ENCODE measurements at regions of chr1 and their contacts with region 1.

Region 1: DNA sequence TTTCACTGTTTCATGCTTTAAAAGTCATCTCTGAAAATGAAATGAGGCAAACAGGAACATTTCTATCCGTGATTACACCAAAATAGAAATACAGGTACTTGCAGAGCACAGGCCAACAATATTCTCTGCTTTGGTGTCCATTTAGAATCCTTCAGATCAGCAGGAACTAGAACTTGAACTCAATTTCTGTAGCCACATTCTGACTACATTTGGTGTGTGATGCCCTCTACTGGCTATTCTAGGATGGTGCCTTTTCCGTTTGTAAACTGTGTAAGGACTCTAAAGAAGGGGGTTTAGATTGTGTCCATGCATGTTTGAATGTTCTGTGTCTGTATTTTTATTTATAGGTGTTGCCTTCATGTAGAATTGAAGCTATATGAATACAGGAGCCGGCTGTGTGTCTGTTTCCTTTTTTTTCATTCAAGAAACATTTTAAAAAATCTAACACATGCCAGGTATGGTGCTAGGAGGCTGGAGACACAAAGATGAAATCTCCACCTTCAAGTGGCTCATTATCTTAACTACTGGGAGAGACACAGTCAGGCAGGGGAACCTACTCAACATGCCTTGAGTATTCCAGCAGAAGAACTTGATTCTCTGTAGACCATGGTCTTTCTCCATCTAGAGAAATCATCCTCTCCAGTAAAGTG is 7.6 kb upstream of the ZNF326 start:
- DNase-seq: peak; percentile 56
- H3K4me3 ChIP-seq: no peak overlapping the region
- H3K27ac ChIP-seq: no peak overlapping the region
- H3K27me3 ChIP-seq: no peaks in the 10 kb centered on the region
- CTCF ChIP-seq: peak; percentile 87

Region 2: GRCh38 chr1:89405275-89405929 is 581.9 kb before region 1 on chr1:
- CTCF ChIA-PET with region 1: no interaction called
- POLR2A ChIA-PET with region 1: no interaction called
- DNase-seq: no peak
- H3K4me3 ChIP-seq: no peak overlapping the region
- H3K27ac ChIP-seq: no peak overlapping the region
- H3K27me3 ChIP-seq: no peaks in the 10 kb centered on the region
- CTCF ChIP-seq: no peak

Region 3: DNA sequence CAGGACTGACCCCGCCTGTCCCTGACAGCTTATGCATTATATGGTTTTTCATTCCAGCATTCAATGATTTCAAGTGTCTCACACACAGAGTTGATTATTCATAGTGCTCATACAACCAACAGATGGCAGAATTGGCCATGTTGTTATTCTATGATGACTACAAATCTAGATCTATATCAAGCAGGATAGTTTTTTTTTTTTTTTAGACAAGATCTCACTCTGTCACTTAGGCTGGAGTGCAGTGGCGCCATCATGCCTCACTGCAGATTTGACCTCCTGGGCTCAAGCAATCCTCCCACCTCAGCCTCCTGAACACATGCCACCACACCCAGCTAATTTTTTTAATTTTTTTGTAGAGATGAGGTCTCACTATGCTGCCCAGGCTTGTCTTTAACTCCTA is 206.6 kb before region 1 on chr1:
- CTCF ChIA-PET with region 1: interaction called, 112 read pairs
- POLR2A ChIA-PET with region 1: no interaction called
- DNase-seq: no peak
- H3K4me3 ChIP-seq: no peak overlapping the region
- H3K27ac ChIP-seq: no peak overlapping the region
- H3K27me3 ChIP-seq: peaks cover 6% of the 10 kb centered on the region
- CTCF ChIP-seq: peak; percentile 57

Region 4: DNA sequence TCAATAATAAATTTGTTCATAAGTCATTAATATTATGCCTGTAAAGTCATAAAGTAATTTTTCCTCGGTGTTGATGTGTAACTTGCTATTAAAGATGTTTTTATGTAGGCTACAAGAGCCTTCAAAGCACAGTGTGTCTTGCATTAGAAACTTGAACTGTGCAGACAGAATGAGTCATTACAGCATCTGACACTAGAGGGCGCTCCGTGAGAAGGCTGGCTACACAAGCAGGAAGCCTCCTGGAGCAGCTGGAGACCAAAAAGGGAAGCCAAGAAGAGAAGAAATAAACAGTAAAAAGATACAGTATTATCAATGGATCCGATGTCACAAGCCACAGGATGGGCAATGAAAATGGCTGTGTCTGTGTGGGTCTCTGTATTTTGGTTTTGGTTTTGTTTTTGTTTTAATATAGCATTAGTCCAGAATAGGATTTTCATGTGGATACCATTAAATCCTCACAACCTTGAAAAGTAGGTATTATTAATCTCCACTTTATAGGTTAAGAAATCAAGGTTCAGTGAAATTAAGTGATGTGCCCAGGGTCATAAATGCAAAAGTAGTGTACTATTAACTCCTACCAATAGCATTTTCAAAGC is 182.6 kb before region 1 on chr1:
- CTCF ChIA-PET with region 1: interaction called, 76 read pairs
- POLR2A ChIA-PET with region 1: no interaction called
- DNase-seq: peak; percentile 78
- H3K4me3 ChIP-seq: no peak overlapping the region
- H3K27ac ChIP-seq: no peak overlapping the region
- H3K27me3 ChIP-seq: no peaks in the 10 kb centered on the region
- CTCF ChIP-seq: peak; percentile 96

Region 5: GRCh38 chr1:89820422-89821321 is 166.6 kb before region 1 on chr1 and contains the start of gene LRRC8D:
- CTCF ChIA-PET with region 1: interaction called, 10 read pairs
- POLR2A ChIA-PET with region 1: no interaction called
- DNase-seq: no peak
- H3K4me3 ChIP-seq: peak within 1 kb of the TSS; percentile 75
- H3K27ac ChIP-seq: no peak within 1 kb of the TSS
- H3K27me3 ChIP-seq: peaks cover 4% of the 10 kb centered on the region
- CTCF ChIP-seq: no peak
- polyA plus RNA-seq, gene LRRC8D: 41.1 and 48.7 TPM in 2 replicates

Region 6: DNA sequence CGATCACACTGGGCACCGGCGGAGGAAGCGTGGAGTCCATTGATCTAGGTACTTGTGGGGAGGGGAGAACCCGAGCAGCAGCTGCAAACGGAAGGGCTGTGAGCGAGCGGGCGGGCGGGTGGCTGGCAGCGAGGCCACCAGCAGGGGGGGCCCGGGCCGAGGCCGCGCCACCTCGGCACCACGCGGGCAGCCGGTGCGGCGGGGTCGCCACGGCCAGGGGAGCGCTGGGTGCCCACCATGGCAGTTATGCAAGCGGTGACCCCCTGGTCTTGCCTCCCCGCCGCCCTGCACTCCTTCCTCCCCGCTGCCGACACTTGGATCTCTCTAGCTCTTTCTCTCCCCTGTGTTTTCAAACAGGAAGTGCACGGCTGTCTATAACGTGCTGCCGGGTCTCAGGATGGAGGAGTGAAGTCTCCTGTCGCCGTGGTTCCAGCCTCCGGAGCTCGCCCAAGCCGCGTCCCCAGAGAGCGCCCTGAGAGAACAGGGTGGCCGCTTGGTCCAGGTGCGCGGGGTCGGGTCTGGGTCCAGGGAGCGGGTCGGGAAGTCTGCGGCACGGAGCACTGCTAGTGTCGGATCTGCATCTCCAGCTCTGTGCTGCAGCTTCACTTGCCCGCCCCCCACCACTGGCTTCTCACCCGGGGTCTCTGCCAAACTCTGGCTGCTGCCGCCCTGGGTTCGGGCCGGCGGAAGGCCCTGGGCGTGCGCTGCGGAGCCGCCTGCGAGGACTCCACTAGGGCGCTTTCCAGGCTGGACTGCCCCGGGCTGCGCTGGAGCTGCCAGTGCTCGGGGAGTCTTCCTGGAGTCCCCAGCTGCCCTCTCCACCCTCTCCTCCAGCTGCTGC is 143.8 kb before region 1 on chr1:
- CTCF ChIA-PET with region 1: interaction called, 29 read pairs
- POLR2A ChIA-PET with region 1: interaction called, 5 read pairs
- DNase-seq: no peak
- H3K4me3 ChIP-seq: peak overlapping the region; percentile 80
- H3K27ac ChIP-seq: peak overlapping the region; percentile 66
- H3K27me3 ChIP-seq: no peaks in the 10 kb centered on the region
- CTCF ChIP-seq: peak; percentile 33

Region 7: GRCh38 chr1:89965193-89965768 is 22.0 kb before region 1 on chr1:
- CTCF ChIA-PET with region 1: interaction called, 3 read pairs
- POLR2A ChIA-PET with region 1: interaction called, 10 read pairs
- DNase-seq: no peak
- H3K4me3 ChIP-seq: no peak overlapping the region
- H3K27ac ChIP-seq: no peak overlapping the region
- H3K27me3 ChIP-seq: no peaks in the 10 kb centered on the region
- CTCF ChIP-seq: no peak